HCT116 (cell line): ENCODE measurements at regions of chr6 and their contacts with region 1.

Region 1: GRCh38 chr6:41066867-41067304 is 5.3 kb downstream of the OARD1 start:
- DNase-seq: peak; percentile 70
- ATAC-seq: no peak
- H3K4me3 ChIP-seq: no peak overlapping the region
- H3K27ac ChIP-seq: no peak overlapping the region
- H3K4me1 ChIP-seq: peaks cover 0 to 6% of the 10 kb centered on the region in 2 experiments; a peak in 1 of 4 replicates
- H3K27me3 ChIP-seq: no peaks in the 10 kb centered on the region
- CTCF ChIP-seq: peak; percentile 65 to 87 (median 74); a peak in 5 of 6 replicates
- POLR2A ChIP-seq: no peak
- RAD21 ChIP-seq: peak; percentile 72

Region 2: GRCh38 chr6:39347906-39348585 is 1718.8 kb before region 1 on chr6:
- CTCF ChIA-PET with region 1: no interaction called
- POLR2A ChIA-PET with region 1: no interaction called
- RAD21 ChIA-PET with region 1: no interaction called
- intact Hi-C with region 1: loop called (anchors 5 kb)
- DNase-seq: peak; percentile 24
- ATAC-seq: peak; percentile 92
- H3K4me3 ChIP-seq: no peak overlapping the region
- H3K27ac ChIP-seq: no peak overlapping the region
- H3K4me1 ChIP-seq: no peaks in the 10 kb centered on the region
- H3K27me3 ChIP-seq: no peaks in the 10 kb centered on the region; the same call in 1 of the 2 replicates
- CTCF ChIP-seq: peak; percentile 51 to 87 (median 85); a peak in 5 of 6 replicates
- POLR2A ChIP-seq: no peak
- RAD21 ChIP-seq: peak; percentile 79

Region 3: GRCh38 chr6:40894962-40895799 is 171.7 kb before region 1 on chr6:
- CTCF ChIA-PET with region 1: no interaction called
- POLR2A ChIA-PET with region 1: no interaction called
- RAD21 ChIA-PET with region 1: no interaction called
- intact Hi-C with region 1: loop called (anchors 1 kb)
- DNase-seq: peak; percentile 40
- ATAC-seq: peak; percentile 99
- H3K4me3 ChIP-seq: no peak overlapping the region
- H3K27ac ChIP-seq: no peak overlapping the region
- H3K4me1 ChIP-seq: peaks cover 0 to 3% of the 10 kb centered on the region in 2 experiments; a peak in 2 of 4 replicates
- H3K27me3 ChIP-seq: no peaks in the 10 kb centered on the region
- CTCF ChIP-seq: peak; percentile 70 to 78 (median 77)
- POLR2A ChIP-seq: no peak
- RAD21 ChIP-seq: peak; percentile 91